ENCODE measurements at regions of chr3 and their contacts with region 1.

Region 1: GRCh38 chr3:113019182-113020137 is 28.7 kb downstream of the GTPBP8 start:
- DNase-seq: peak; percentile 81 to 87
- H3K4me3 ChIP-seq: peak overlapping the region; percentile 84 to 96 (median 88)
- H3K27ac ChIP-seq: peak overlapping the region; percentile 91
- H3K4me1 ChIP-seq: peaks cover 0 to 2% (median 0%) of the 10 kb centered on the region in 4 experiments; a peak in 2 of 7 replicates
- H3K27me3 ChIP-seq: no peaks in the 10 kb centered on the region; a peak in 1 of 7 replicates
- CTCF ChIP-seq: no peak
- EP300 ChIP-seq: no peak
- POLR2A ChIP-seq: peak; percentile 68 to 72
- RAD21 ChIP-seq: peak in 1 of 2 experiments; percentile 1; a peak in 1 of 4 replicates

Region 2: GRCh38 chr3:113008117-113008516 is 11.3 kb before region 1 on chr3:
- CTCF ChIA-PET with region 1: no interaction called
- POLR2A ChIA-PET with region 1: interaction called, 13 read pairs
- DNase-seq: no peak
- H3K4me3 ChIP-seq: no peak overlapping the region
- H3K27ac ChIP-seq: no peak overlapping the region
- H3K4me1 ChIP-seq: no peaks in the 10 kb centered on the region
- H3K27me3 ChIP-seq: no peaks in the 10 kb centered on the region
- CTCF ChIP-seq: no peak
- EP300 ChIP-seq: no peak
- POLR2A ChIP-seq: no peak
- RAD21 ChIP-seq: no peak

Region 3: DNA sequence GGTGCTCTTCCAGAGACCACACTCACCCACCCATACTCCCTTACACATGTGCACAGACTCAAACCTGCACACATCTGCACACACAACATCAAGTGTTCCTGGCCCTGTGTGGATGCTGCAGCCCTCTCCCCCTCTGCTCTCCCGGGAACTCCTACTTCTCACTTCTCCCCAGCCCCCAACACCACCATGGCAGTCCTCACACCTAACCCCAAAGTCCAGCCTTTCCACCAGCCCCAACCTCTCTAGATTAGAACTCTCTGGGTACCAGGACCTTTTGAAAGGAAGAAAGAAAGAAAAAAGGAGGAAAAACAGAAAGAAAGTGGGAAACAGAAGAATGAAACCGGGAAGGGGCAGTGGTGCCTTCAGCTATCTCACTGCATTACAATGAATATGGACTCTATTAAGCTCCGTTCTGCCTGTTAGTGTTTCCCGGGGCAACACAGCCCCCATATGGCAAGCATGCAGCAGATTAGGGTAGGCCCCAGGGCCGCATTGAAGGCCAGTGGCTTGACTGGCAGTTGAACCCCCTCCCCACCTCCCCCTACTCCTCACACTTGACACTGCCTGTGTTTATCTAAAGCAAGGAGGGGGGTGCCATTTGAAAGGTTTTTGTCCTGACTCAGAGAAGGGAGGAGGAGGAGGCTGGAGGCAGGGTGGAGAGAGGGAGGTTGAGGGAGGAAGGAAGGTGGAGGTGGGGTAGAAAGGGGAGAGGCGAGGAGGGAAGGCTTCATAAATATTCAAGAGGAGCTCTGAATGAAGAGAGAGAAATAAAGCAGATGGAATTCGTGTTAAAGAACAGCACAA is 222.0 kb after region 1 on chr3:
- CTCF ChIA-PET with region 1: no interaction called
- POLR2A ChIA-PET with region 1: no interaction called
- DNase-seq: peak in 1 of 2 experiments; percentile 58
- H3K4me3 ChIP-seq: peak overlapping the region in 1 of 4 experiments; percentile 32; a peak in 1 of 8 replicates
- H3K27ac ChIP-seq: peak overlapping the region; percentile 49; the same call in 1 of the 2 replicates
- H3K4me1 ChIP-seq: peaks cover 7 to 30% (median 15%) of the 10 kb centered on the region in 4 experiments
- H3K27me3 ChIP-seq: no peaks in the 10 kb centered on the region
- CTCF ChIP-seq: no peak
- EP300 ChIP-seq: peak in 1 of 2 experiments; percentile 30; a peak in 1 of 3 replicates
- POLR2A ChIP-seq: no peak; a peak in 1 of 3 replicates
- RAD21 ChIP-seq: peak; percentile 27; a peak in 2 of 4 replicates